ENCODE measurements at regions of chr12 and their contacts with region 1.

Region 1: DNA sequence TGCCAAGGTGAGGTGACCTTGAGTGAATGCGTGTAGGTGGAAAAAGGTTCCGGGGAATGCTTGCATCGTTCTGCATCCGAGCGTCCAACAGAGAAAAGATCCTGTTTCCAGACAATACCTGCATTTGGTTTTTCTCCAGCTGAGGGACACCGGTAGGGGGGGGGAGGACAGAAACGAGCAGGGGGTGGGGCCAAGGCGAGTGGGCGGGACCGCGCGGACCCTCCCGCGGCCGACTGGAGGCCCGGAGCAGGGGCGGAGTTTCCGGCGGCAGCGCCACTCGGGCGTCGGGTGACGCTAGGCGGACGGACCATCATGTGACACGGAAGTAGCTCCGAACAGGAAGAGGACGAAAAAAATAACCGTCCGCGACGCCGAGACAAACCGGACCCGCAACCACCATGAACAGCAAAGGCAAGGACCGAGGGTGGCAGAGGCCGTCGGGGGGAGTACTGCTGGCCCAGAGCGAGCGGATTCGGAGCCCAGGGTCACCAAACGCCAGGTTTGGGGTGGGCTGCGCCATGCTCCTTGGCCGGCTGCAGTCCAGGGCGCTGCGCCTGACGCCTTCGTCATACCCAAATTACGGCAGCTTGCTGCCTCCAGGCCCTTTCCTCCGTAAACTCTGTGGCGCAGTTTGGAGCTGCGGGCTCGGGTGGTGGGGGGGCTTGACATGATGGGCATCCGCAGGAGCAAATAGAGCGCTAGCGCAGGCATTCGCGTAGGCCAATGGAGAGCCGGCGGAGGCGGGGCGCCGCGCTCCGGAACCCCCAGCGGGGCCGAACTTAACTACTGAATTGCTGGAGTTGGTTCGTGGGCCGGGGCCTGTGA is at the start of gene DAZAP2:
- DNase-seq: peak; percentile 96 to 99 (median 97)
- H3K4me3 ChIP-seq: peak within 1 kb of the TSS; percentile 73 to 100 (median 92)
- H3K27ac ChIP-seq: peak within 1 kb of the TSS; percentile 98 to 100 (median 100)
- H3K4me1 ChIP-seq: peaks cover 8 to 28% of the 10 kb centered on the region in 2 donors
- H3K27me3 ChIP-seq: no peaks in the 10 kb centered on the region
- CTCF ChIP-seq: peak in 3 of 6 experiments; percentile 22 to 35 (median 28)
- POLR2A ChIP-seq: peak; percentile 95 to 96
- total RNA-seq, gene DAZAP2: 146 to 454 (median 227) TPM

Region 2: DNA sequence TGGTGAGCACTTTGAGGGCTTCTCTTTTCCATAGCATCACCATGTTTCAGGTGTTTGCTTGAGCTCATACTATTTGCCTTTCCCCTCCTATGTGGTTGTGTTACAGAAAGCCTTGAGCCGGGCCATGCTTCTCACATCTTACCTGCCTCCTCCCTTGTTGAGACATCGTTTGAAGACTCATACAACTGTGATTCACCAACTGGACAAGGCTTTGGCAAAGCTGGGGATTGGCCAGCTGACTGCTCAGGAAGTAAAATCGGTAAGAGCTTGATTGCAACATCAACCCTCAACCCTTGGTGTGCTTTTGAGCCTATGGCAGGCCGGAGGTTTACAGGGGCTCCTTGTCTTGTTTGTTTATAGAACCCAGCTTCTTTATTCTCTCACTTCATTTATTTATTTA is 182.5 kb before region 1 on chr12:
- intact Hi-C with region 1: loop called in 1 of 2 experiments (anchors 10 kb)
- DNase-seq: peak; percentile 26 to 80 (median 66)
- H3K4me3 ChIP-seq: no peak overlapping the region
- H3K27ac ChIP-seq: no peak overlapping the region
- H3K4me1 ChIP-seq: peaks cover 0 to 8% of the 10 kb centered on the region in 2 donors
- H3K27me3 ChIP-seq: no peaks in the 10 kb centered on the region
- CTCF ChIP-seq: no peak
- POLR2A ChIP-seq: no peak

Region 3: DNA sequence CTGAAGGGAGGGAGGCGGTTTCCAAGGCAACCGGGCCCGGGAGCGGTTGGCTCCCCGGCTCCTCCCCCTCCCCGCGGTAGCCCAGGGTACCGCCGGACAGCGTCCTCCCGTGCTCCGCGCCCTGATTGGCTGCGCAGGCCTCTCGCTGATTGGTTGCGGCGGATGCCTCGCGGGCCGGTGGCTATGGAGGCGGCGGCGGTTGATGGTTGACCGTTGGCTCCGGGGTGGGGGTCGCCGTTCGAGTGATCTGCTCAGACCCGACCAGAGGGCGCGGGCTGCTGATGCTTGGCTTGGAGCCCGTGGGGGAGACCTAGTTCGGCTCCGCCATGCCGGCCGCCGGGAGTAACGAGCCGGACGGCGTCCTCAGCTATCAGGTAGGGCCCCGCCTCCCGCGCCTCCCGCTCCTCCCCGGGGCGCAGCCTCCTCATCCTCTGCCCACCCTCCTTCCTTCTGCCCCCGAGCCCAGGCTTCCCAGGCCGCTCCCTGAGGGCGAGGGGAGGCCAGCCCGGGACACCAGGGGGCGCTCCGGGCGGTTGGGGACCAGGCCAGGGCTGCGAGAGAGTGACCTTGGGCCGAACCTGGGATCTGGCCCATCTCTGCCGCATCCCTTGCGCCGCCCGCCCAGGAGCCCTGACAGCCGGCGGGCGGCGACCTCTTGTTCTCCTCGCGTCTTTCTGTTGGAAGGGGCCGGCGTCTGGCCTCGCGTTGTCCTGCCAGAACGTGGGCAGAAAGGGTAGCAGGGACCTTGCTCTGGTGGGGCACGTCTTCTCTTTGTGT is 186.1 kb after region 1 on chr12 and contains the start of gene SLC4A8:
- intact Hi-C with region 1: no loop called
- DNase-seq: peak; percentile 86 to 97 (median 95)
- H3K4me3 ChIP-seq: peak within 1 kb of the TSS in 3 of 4 donors; percentile 1 to 54 (median 25)
- H3K27ac ChIP-seq: peak within 1 kb of the TSS in 2 of 5 donors; percentile 18 to 71
- H3K4me1 ChIP-seq: peaks cover 4 to 17% of the 10 kb centered on the region in 2 donors
- H3K27me3 ChIP-seq: no peaks in the 10 kb centered on the region
- CTCF ChIP-seq: peak; percentile 54 to 78 (median 64)
- POLR2A ChIP-seq: no peak
- total RNA-seq, gene SLC4A8: 3.0 to 27.0 (median 13.8) TPM

Region 4: DNA sequence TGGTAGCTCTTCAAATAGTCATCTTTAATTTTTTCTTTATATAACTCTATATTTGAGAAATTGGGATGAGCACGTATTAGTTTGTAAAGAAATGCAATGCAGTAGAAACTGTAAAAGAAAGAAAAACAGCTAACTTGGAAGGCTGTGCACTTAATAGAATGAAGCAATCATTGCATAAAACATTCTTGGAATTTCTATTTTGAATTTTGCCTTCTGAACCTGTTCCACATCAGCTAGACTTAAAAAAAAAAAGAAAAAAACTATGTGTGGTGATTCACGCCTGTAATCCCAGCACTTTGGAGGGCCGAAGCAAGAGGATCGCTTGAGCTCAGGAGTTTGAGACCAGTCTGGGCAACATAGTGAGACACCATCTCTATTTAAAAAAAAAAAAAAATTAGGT is 381.7 kb after region 1 on chr12:
- intact Hi-C with region 1: no loop called
- DNase-seq: no peak
- H3K4me3 ChIP-seq: no peak overlapping the region
- H3K27ac ChIP-seq: no peak overlapping the region
- H3K4me1 ChIP-seq: no peaks in the 10 kb centered on the region
- H3K27me3 ChIP-seq: no peaks in the 10 kb centered on the region
- CTCF ChIP-seq: no peak
- POLR2A ChIP-seq: no peak